ENCODE measurements at regions of chr6 and their contacts with region 1.

Region 1: DNA sequence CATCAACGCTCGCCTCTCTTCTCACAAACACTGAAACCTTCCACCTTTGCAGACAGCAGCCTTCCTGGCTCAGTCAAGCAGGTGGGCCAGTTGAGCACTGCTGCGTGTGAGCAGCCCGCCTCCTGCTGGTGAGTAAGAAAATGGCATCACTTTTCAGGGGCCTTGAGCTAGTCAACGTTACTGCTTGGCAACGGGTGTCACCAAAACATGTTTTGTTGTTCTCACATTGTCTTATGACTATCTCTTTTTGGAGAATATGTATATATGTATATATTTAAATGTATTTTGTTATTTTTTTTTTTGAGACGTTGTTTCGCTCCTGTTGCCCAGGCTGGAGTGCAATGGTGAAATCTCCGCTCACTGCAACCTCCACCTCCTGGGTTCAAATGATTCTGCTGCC is 97.0 kb upstream of the AGPAT4 start:
- DNase-seq: peak; percentile 77
- H3K4me3 Mint-ChIP-seq: no peak overlapping the region
- H3K27ac Mint-ChIP-seq: no peak overlapping the region
- H3K4me1 Mint-ChIP-seq: no peaks in the 10 kb centered on the region
- H3K27me3 Mint-ChIP-seq: no peaks in the 10 kb centered on the region
- CTCF ChIP-seq: peak; percentile 83

Region 2: GRCh38 chr6:160750276-160750689 is 620.6 kb before region 1 on chr6:
- CTCF ChIA-PET with region 1: interaction called, 15 read pairs
- intact Hi-C with region 1: loop called (anchors 2 kb)
- DNase-seq: peak; percentile 61
- H3K4me3 Mint-ChIP-seq: no peak overlapping the region
- H3K27ac Mint-ChIP-seq: no peak overlapping the region
- H3K4me1 Mint-ChIP-seq: no peaks in the 10 kb centered on the region
- H3K27me3 Mint-ChIP-seq: peaks cover 12% of the 10 kb centered on the region
- CTCF ChIP-seq: peak; percentile 89

Region 3: DNA sequence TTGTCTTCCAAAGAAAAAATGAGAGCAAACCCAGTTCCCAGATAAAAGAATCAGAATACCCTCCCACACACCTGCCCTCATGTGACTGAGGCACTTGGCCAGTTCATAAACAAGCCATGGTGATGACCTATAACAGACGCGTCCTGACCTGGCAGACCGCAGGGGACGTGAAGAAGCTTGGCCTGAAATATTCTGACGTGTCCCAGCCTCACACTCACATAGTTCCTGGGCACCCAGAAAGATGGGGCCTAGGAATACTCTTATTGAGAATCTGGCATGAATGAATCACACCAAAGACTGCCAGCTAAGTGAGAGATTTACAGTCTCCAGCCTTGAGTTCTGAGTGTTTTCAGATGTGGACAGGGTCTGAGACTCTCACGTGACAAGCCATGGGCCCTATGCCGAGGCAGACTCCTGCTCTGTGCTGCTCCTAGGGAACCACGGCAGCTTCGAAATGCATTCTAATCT is 396.5 kb before region 1 on chr6:
- CTCF ChIA-PET with region 1: no interaction called
- intact Hi-C with region 1: no loop called
- DNase-seq: no peak
- H3K4me3 Mint-ChIP-seq: no peak overlapping the region
- H3K27ac Mint-ChIP-seq: no peak overlapping the region
- H3K4me1 Mint-ChIP-seq: no peaks in the 10 kb centered on the region
- H3K27me3 Mint-ChIP-seq: peaks cover 14% of the 10 kb centered on the region
- CTCF ChIP-seq: no peak

Region 4: DNA sequence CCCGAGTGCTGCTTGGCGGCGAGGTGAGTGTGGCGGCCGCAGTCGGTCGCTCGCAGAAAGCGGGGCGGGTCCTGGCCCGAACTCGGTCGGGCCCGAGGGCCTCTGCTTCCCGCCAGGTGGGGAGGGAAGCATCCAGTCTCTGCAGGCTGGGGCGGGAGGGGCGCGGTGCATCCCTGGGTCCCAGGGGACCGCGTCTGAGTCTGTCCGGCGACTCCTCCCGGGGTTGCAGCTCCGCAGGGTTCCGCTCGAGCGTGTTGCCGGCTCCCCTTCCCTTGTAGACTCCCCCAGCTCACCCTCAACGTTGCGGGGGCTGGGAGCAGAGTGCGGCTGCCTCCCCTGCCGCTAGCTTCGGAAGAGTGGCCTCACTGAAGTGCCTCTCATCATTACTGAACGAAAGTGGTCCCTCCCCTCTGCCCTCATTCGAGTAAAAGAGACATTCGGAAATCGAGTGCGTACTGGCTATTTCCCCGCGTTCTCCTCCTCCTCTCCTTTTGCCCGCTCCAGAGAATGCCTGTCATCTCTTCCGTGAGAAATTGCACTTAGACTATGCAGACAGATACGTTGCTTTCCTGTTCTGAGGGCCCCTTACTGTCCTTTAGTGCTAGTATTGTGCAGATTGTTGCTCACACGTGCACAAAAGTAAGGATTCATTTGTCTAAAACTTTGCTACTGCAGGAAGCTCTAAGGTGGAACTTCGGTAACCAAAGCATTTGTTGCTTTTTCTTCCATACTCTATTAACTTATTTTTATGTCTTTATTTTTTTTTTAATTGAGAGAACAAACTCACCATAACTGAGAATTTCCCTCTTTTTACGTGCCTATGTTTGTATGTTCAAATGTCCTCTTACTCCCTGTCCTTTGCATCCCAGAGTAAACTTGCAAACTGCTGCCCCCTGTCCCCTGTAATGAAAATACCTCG is 378.6 kb before region 1 on chr6:
- CTCF ChIA-PET with region 1: interaction called, 4 read pairs
- intact Hi-C with region 1: loop called (anchors 5 kb)
- DNase-seq: peak; percentile 57
- H3K4me3 Mint-ChIP-seq: peak overlapping the region; percentile 95
- H3K27ac Mint-ChIP-seq: peak overlapping the region; percentile 97
- H3K4me1 Mint-ChIP-seq: peaks cover 16% of the 10 kb centered on the region
- H3K27me3 Mint-ChIP-seq: no peaks in the 10 kb centered on the region
- CTCF ChIP-seq: peak; percentile 50

Region 5: DNA sequence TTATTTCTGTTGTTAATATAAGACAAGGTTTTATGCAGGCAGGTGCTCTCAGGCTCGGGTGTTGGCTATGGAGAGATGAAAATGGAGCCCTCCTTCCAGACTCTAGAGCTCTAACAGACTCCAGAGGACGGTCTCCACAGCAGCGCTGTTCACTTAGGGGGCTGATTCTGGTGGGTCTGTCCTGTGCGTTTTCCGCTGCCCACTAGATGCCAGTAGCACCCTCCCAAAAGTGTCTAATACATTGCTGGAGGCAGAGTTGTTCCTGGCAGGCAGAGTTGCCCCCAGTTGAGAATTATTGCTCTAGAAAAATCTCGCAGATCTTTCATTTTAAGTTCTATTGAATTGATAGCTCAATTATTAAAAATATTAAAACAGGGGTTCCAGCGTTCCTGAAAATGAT is 269.4 kb before region 1 on chr6:
- CTCF ChIA-PET with region 1: interaction called, 5 read pairs
- intact Hi-C with region 1: loop called (anchors 10 kb)
- DNase-seq: no peak
- H3K4me3 Mint-ChIP-seq: no peak overlapping the region
- H3K27ac Mint-ChIP-seq: no peak overlapping the region
- H3K4me1 Mint-ChIP-seq: peaks cover 13% of the 10 kb centered on the region
- H3K27me3 Mint-ChIP-seq: no peaks in the 10 kb centered on the region
- CTCF ChIP-seq: no peak

Region 6: GRCh38 chr6:161273752-161274487 is 97.0 kb before region 1 on chr6 and contains the start of gene AGPAT4:
- CTCF ChIA-PET with region 1: interaction called, 12 read pairs
- intact Hi-C with region 1: loop called (anchors 1 kb)
- DNase-seq: peak; percentile 75
- H3K4me3 Mint-ChIP-seq: peak within 1 kb of the TSS; percentile 75
- H3K27ac Mint-ChIP-seq: peak within 1 kb of the TSS; percentile 96
- H3K4me1 Mint-ChIP-seq: peaks cover 12% of the 10 kb centered on the region
- H3K27me3 Mint-ChIP-seq: no peaks in the 10 kb centered on the region
- CTCF ChIP-seq: no peak
- total RNA-seq, gene AGPAT4: 8.7 and 11.3 TPM in 2 replicates